PC-3 (cell line): ENCODE measurements at regions of chr15 and their contacts with region 1.

Region 1: DNA sequence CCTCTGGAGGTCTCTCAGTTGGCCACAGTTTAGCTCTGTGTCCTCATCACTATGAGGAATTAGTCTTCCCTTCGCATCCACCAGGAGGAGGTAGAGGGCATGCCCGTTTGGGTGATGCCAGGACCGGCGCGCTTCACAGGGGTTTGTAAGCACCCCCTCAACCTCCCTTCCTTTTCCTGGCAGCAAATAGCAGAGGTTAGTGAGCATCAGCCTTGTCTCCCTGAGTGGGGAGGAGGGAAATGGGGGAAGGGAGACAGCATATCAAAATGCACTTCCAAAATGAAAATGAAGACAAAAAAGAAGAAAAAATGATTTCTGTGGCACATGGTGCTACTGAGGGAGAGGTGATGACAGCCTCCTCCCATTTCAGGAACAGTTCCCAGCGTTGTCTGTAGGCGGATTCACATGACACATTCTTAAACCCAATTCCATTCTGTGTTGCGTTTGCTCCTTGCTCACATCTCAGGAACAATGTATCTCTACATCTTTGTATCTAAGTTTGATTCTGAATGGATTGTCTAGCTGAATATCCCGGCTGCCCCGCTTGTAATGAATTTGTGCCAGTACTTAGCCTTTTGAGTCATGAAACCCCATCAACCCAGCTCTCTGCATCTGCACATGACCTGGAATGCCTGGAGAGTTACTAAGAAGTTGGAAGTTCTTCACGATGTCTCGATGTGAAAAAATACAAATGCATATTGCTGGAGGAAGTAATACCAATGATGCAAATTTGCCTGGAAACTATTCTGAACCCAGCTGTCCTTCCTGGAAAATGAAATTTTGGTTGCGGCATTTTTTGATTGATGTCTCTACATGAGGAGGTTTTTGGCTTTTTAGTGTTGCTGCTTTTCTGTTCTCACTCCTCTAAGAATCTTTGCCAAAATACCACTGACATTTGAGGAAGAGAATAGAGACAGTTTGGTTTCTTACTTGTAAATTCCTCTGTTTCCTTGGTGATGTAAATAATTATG is 45.2 kb downstream of the TYRO3 start:
- DNase-seq: peak; percentile 83
- ATAC-seq: peak; percentile 94
- H3K4me3 ChIP-seq: peak overlapping the region; percentile 59
- H3K27ac ChIP-seq: no peak overlapping the region
- H3K4me1 ChIP-seq: peaks cover 17% of the 10 kb centered on the region
- H3K27me3 ChIP-seq: no peaks in the 10 kb centered on the region
- CTCF ChIP-seq: peak; percentile 89

Region 2: GRCh38 chr15:41465822-41466421 is 138.3 kb before region 1 on chr15:
- CTCF ChIA-PET with region 1: interaction called, 8 read pairs
- POLR2A ChIA-PET with region 1: no interaction called
- intact Hi-C with region 1: loop called (anchors 10 kb)
- DNase-seq: peak; percentile 73
- ATAC-seq: peak; percentile 80
- H3K4me3 ChIP-seq: no peak overlapping the region
- H3K27ac ChIP-seq: no peak overlapping the region
- H3K4me1 ChIP-seq: no peaks in the 10 kb centered on the region
- H3K27me3 ChIP-seq: no peaks in the 10 kb centered on the region
- CTCF ChIP-seq: peak; percentile 97

Region 3: GRCh38 chr15:41483115-41483514 is 121.1 kb before region 1 on chr15:
- CTCF ChIA-PET with region 1: no interaction called
- POLR2A ChIA-PET with region 1: no interaction called
- intact Hi-C with region 1: no loop called
- DNase-seq: no peak
- ATAC-seq: no peak
- H3K4me3 ChIP-seq: no peak overlapping the region
- H3K27ac ChIP-seq: no peak overlapping the region
- H3K4me1 ChIP-seq: no peaks in the 10 kb centered on the region; the same call in 1 of the 2 replicates
- H3K27me3 ChIP-seq: no peaks in the 10 kb centered on the region
- CTCF ChIP-seq: no peak

Region 4: DNA sequence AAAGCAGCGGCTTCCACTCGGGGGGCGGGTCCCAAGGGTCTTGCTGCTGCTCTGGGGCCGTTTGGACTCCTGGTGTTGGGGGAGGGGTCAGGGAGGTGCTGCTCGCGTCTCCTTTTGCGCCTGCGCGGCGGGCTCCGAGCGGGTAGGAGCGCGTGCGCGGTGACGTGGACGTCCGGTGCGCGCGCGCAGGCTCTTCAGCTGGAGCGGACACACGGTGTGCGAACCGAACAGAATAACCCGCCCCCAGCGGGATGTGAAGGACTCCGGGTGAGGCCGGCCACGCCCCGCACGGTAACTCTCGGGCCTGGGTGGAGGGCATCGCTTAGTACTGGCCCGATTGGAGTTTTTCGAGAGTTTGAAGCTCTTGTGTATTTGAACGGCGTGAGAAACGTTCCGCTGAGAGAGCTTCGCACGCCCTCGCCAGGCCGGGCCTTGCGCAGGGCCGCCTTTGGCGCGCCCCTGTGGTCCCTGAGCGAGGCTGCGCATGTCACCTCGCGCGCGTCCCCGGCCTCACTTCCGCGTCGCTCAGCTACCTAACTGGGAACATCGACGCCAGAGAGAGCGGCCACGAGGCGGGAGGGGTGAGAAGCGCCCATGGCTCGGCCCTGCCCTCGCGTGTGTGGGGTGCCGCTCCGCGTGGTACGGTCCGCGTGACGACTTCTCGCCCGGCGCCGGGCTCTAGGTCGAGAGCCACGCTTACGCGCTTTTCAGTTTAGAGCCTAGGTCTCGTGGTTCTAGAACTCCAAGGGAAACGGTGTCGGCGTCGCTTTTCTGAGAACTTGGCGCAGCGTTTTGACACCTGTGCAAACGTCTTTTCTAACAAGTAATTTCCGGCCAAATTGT is 56.2 kb after region 1 on chr15 and contains the start of gene MGA:
- CTCF ChIA-PET with region 1: interaction called, 5 read pairs
- POLR2A ChIA-PET with region 1: no interaction called
- intact Hi-C with region 1: loop called (anchors 5 kb)
- DNase-seq: peak; percentile 94
- ATAC-seq: peak; percentile 78
- H3K4me3 ChIP-seq: peak within 1 kb of the TSS; percentile 68
- H3K27ac ChIP-seq: peak within 1 kb of the TSS; percentile 76
- H3K4me1 ChIP-seq: peaks cover 31% of the 10 kb centered on the region
- H3K27me3 ChIP-seq: no peaks in the 10 kb centered on the region
- CTCF ChIP-seq: peak; percentile 16; the same call in 1 of the 2 replicates
- total RNA-seq, gene MGA: 19.0 and 21.2 TPM in 2 replicates

Region 5: DNA sequence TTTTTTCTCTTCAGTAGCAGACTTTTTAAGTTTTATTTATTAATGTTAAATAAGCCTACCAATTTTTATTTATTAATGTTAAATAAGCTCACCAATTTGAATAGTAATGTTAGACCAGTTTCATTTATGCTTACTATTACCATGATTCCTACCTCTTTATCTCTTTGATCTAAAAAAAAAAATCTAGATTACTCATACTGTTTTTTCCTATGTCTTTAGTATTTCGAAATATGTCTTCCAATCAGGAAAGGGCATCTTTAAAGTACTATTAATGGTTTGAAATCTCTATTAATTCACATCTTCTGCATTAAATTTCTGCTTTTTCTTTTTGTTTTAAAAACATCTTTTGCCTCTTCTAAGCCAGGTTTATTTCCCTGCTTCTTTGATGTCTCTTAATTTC is 142.6 kb after region 1 on chr15:
- CTCF ChIA-PET with region 1: no interaction called
- POLR2A ChIA-PET with region 1: no interaction called
- intact Hi-C with region 1: loop called (anchors 5 kb)
- DNase-seq: peak; percentile 39
- ATAC-seq: no peak
- H3K4me3 ChIP-seq: no peak overlapping the region
- H3K27ac ChIP-seq: no peak overlapping the region
- H3K4me1 ChIP-seq: peaks cover 4% of the 10 kb centered on the region; the same call in 1 of the 2 replicates
- H3K27me3 ChIP-seq: no peaks in the 10 kb centered on the region
- CTCF ChIP-seq: no peak

Region 6: GRCh38 chr15:41811432-41812195 is 207.4 kb after region 1 on chr15:
- CTCF ChIA-PET with region 1: no interaction called
- POLR2A ChIA-PET with region 1: no interaction called
- intact Hi-C with region 1: loop called (anchors 5 kb)
- DNase-seq: peak; percentile 89
- ATAC-seq: peak; percentile 96
- H3K4me3 ChIP-seq: no peak overlapping the region
- H3K27ac ChIP-seq: no peak overlapping the region
- H3K4me1 ChIP-seq: peaks cover 14% of the 10 kb centered on the region
- H3K27me3 ChIP-seq: no peaks in the 10 kb centered on the region
- CTCF ChIP-seq: peak; percentile 94